Activated T-helper 2 cell treated with anti-CD3 and anti-CD28 coated beads, Interferon-gamma antibody, Interleukin-2, Interleukin-4, amounts not matched to agents 10 μg/mL and 5 μg/mL and 100 μg/mL, durations not matched to agents 14 hours and 24 hours and 36 hours (primary cell): ENCODE measurements at regions of chr4 and their contacts with region 1.

Region 1: GRCh38 chr4:121112530-121112929 is 40.2 kb upstream of the NDNF start:
- DNase-seq: no peak
- H3K4me3 Mint-ChIP-seq: no peak overlapping the region
- H3K27ac Mint-ChIP-seq: no peak overlapping the region
- H3K4me1 Mint-ChIP-seq: peaks cover 19% of the 10 kb centered on the region
- H3K27me3 Mint-ChIP-seq: peaks cover 32% of the 10 kb centered on the region

Region 2: DNA sequence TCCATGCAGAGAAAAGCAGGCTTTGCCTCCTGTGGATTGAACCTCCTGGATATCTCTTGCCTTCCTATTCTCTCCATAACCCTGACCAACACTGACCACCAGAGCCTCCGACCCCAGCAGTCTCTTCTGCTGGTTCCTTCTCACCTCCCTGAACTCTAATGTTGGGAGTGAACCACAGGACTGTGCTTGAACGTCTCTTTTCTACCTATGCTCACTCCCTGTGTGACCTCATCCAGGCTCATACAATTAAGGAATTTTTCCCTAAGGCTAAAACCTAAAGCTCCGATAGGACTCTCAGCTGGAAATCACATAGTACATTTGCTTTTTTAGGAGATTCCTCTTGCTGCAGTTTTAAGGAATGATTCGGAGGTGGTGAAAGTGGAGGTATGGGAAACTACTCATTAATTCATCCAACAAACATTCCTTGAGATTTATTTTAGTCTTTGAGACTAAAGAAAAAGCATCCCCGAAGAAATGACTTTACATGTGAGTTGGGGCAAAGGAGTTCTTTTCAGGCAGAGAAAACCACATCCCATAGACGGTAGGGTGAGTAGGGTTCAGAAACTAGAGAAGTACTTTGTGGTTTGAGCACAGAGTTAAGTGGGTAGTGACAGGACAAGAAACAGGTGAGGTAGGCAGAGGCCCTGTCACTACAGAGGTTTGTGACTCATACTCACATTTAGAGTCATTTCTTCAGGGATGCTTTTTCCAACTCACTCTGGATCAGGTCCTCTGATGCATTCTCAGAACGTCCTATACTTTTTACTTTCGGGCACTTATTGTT is 71.0 kb before region 1 on chr4:
- intact Hi-C with region 1: loop called (anchors 1 kb)
- DNase-seq: peak; percentile 16
- H3K4me3 Mint-ChIP-seq: no peak overlapping the region
- H3K27ac Mint-ChIP-seq: no peak overlapping the region
- H3K4me1 Mint-ChIP-seq: peaks cover 13% of the 10 kb centered on the region
- H3K27me3 Mint-ChIP-seq: peaks cover 46% of the 10 kb centered on the region

Region 3: DNA sequence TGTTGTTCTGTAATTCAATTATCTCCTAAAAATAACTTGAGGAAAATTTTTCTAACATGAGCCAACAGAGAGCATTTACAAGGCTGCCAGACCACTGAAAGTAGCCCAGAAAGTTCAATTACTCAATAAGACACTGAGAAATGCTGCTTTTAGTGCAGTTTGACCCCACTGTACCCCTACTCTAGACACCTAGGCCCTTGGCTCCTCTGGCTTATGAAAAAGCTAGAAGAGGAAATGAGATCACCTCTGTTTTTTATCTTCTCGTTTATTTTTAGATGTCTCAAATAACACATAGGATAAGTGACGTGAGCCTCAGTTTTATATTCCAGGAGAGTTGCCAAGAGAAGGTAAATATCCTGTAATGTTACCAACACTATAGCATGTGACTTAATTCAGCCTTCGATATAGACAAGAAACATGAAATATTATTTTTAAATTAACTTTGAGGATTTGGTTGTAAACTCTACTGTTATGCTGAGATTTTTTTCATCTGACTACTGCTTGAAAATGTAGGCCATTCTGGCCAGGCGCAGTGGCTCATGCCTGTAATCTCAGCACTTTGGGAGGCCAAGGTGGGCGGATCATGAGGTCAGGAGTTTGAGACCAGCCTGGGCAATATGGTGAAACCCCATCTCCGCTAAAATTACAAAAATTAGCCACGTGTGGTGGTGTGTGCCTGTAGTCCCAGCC is 27.1 kb after region 1 on chr4:
- intact Hi-C with region 1: loop called (anchors 1 kb)
- DNase-seq: no peak
- H3K4me3 Mint-ChIP-seq: no peak overlapping the region
- H3K27ac Mint-ChIP-seq: peak overlapping the region; percentile 58
- H3K4me1 Mint-ChIP-seq: peaks cover 47% of the 10 kb centered on the region
- H3K27me3 Mint-ChIP-seq: no peaks in the 10 kb centered on the region

Region 4: GRCh38 chr4:121182296-121182695 is 69.8 kb after region 1 on chr4:
- intact Hi-C with region 1: loop called (anchors 1 kb)
- DNase-seq: no peak
- H3K4me3 Mint-ChIP-seq: peak overlapping the region; percentile 73
- H3K27ac Mint-ChIP-seq: peak overlapping the region; percentile 87
- H3K4me1 Mint-ChIP-seq: peaks cover 51% of the 10 kb centered on the region
- H3K27me3 Mint-ChIP-seq: peaks cover 4% of the 10 kb centered on the region

Region 5: DNA sequence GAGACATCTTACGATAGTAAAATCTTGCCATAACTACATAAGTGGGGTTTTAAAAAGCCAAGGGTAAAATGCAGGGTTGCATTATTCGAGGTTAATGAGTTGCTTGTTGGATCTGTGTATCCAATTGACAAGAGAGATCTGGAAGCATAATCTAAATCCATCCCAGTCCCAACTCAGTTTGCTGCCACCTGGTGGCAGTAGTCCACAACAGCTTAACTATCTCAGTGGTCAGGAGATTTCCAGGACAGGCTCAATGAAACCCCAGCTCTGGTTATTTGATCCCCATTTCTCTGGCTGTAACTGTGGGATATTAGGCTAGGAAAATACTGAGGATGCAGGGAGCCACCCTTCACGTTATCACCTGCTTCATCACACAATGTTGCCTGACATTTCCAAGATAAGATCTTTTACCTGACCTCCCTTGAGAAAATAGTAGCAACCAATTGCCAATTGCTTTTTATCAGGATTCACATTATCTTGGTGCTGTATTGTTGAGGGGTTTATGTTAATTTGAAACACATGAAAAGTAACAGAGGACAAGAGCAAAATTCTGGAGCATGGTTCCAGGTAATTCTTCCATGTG is 139.8 kb after region 1 on chr4:
- intact Hi-C with region 1: loop called (anchors 1 kb)
- DNase-seq: peak; percentile 28
- H3K4me3 Mint-ChIP-seq: no peak overlapping the region
- H3K27ac Mint-ChIP-seq: no peak overlapping the region
- H3K4me1 Mint-ChIP-seq: peaks cover 55% of the 10 kb centered on the region
- H3K27me3 Mint-ChIP-seq: peaks cover 1% of the 10 kb centered on the region